A673 (cell line): ENCODE measurements at regions of chr20 and their contacts with region 1.

Region 1: DNA sequence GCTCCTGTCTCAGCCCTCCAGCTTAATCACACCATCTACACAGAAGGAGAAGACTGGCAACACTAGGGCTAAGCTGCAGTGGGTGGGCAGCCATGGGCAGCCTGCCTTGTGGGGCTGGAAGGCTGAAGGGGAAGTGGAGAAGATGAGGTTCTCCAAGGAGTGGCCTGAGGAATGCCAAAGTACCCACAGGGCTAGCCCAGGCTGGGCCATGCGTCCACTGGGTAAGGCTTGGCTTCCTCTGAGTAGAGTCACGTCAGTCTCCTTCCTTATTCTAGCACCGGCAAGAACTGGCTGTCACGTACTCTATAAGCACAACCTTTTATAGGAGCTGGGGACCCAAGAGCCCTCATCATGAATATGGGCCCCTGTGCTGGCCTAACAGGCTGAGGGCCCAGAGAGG is 110.6 kb upstream of the SIRPA start:
- DNase-seq: no peak
- H3K4me3 ChIP-seq: no peak overlapping the region
- H3K27ac ChIP-seq: no peak overlapping the region
- H3K4me1 ChIP-seq: no peaks in the 10 kb centered on the region
- H3K27me3 ChIP-seq: no peaks in the 10 kb centered on the region
- CTCF ChIP-seq: no peak

Region 2: DNA sequence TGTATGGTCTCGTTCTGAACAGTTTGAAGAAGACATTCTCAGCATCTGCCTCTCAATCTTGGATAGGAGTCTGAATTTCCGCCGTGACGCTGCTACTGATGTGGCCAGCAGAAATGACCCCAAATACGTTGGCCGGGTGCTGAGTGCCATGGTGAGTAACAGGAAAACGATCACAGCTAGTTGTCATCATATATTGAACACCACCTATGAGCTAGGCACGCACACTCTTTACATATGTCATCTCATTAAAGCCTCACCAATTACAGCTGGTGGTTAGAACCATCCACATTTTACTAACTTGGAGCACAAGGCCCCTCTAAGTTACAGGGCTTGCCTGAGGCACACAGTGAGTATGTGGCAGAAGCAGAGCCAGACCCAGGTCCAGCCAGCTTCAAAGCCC is 528.3 kb after region 1 on chr20:
- CTCF ChIA-PET with region 1: no interaction called
- POLR2A ChIA-PET with region 1: interaction called, 16 read pairs
- intact Hi-C with region 1: no loop called
- DNase-seq: no peak
- H3K4me3 ChIP-seq: no peak overlapping the region
- H3K27ac ChIP-seq: no peak overlapping the region
- H3K4me1 ChIP-seq: peaks cover 3% of the 10 kb centered on the region
- H3K27me3 ChIP-seq: no peaks in the 10 kb centered on the region
- CTCF ChIP-seq: no peak